ENCODE measurements at regions of chr20 and their contacts with region 1.

Region 1: GRCh38 chr20:49046087-49046900 is at the start of gene CSE1L:
- DNase-seq: peak; percentile 97

Region 2: DNA sequence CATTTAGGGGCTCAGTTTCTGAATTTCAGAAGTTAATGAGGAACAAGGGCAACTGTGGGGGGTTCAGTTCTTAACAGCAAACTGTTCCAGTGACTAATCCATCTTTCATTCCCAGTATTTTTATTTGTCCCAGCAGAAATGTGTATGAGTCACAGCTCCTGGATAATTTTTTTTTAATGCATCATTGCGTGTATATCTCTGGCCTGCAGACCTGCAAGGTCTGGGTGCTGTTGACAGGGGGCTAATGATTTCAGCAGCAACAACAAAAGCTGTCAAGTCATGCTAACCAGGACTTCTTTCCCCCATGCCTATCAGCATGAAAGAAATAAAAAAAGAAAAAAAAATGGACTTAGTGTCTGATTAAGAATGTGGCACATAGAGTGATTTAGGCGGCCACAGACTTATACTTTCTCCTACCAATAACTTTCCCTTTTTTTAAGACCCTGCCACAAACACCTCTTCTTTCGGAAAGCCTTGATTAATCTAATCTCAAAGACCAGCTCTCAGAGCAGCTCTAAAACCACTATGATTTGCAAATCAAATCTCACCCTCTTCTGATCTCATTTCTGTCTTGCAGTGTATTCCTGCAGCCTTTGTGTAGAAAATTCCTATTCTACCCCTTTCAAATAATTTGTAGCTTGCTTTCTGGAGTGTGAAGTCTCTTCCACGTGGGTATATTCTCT is 204.3 kb before region 1 on chr20:
- CTCF ChIA-PET with region 1: no interaction called
- POLR2A ChIA-PET with region 1: no interaction called
- DNase-seq: no peak

Region 3: DNA sequence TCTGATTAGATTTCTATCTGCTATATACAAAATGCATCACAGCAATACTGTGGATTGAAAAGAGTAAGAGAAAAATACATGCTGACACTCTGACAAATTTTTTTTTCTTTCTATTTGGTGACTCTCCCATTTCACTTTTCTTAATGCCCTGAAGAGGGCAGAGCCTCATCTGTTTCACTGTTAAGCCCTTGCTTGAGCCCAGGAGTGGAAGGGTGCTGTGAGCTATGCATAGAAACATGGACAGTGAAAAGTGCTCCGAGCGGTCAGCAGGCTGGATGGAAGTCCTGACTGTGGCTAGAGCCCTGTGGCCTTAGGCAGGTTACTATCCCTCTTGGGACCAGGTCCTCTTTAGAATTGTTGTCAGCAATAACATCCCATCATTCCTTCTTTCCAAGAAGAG is 17.6 kb before region 1 on chr20:
- CTCF ChIA-PET with region 1: no interaction called
- POLR2A ChIA-PET with region 1: interaction called, 15 read pairs
- DNase-seq: peak; percentile 27

Region 4: GRCh38 chr20:49063279-49063678 is 17.0 kb after region 1 on chr20:
- CTCF ChIA-PET with region 1: no interaction called
- POLR2A ChIA-PET with region 1: interaction called, 27 read pairs
- DNase-seq: no peak